Activated CD8-positive, alpha-beta T cell treated with anti-CD3 and anti-CD28 coated beads, Interleukin-2, amount 10 ng/mL, durations not matched to agents 7 days and 5 days (primary cell): ENCODE measurements at regions of chr6 and their contacts with region 1.

Region 1: GRCh38 chr6:125114248-125114858 is 39.2 kb upstream of the TPD52L1 start:
- DNase-seq: peak; percentile 65
- ATAC-seq: no peak
- H3K4me3 Mint-ChIP-seq: no peak overlapping the region
- H3K27ac Mint-ChIP-seq: no peak overlapping the region
- H3K4me1 Mint-ChIP-seq: no peaks in the 10 kb centered on the region
- H3K27me3 Mint-ChIP-seq: peaks cover 6% of the 10 kb centered on the region

Region 2: DNA sequence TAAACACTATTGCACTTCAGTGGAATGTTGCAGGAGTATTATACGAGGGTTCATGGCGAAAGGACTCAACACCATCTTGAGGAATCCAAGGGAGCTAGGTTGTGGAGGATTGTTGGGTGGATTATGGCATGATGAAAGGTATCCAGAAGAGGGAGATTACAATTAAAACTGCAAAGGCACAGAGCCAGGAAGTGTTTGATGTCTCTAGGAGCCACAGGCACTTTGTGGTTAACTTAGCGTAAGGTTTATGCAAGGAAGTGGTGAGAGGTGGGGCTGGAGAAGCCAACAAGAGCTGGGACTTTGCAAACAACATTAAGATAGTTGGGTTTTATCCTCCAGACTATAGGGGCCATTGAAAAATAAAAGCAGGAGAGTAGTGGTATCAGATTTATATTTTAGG is 47.4 kb before region 1 on chr6:
- CTCF ChIA-PET with region 1: interaction called, 16 read pairs
- POLR2A ChIA-PET with region 1: no interaction called
- DNase-seq: peak; percentile 76
- ATAC-seq: peak; percentile 97
- H3K4me3 Mint-ChIP-seq: no peak overlapping the region
- H3K27ac Mint-ChIP-seq: no peak overlapping the region
- H3K4me1 Mint-ChIP-seq: no peaks in the 10 kb centered on the region
- H3K27me3 Mint-ChIP-seq: peaks cover 4% of the 10 kb centered on the region